Calu3 (cell line): ENCODE measurements at regions of chr12 and their contacts with region 1.

Region 1: DNA sequence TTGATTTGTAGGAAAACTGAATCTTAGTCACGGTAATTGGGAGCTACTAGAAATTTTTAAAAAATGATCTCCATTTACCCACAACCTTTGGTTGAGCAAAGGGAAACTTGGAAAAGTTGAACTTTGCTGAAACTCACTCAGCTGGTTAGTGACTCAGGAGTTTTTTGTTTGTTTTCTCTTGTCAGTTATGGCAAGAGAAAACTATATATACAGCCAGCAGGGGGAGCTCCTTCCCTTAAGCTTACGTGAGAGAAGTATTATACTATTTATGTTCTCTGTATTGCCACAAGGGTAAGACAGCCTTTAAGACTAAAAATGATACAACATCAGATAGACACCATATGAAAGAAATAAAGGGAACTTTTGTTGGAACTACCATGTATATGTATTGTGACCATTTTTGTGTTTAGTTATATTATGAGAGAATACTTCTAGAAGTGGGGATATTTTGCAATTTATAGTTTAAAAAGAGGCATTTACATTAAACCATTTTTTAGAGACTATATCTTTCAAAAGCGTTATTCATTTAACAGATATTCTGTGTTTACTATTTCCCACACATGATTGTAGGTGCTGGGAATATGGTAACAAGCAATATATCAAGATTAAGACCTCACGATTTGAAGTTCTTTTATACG is 28.1 kb upstream of the TBC1D30 start:
- DNase-seq: peak; percentile 88
- H3K4me3 Mint-ChIP-seq: no peak overlapping the region
- H3K27ac Mint-ChIP-seq: no peak overlapping the region
- H3K4me1 Mint-ChIP-seq: peaks cover 44% of the 10 kb centered on the region
- H3K27me3 Mint-ChIP-seq: no peaks in the 10 kb centered on the region
- CTCF ChIP-seq: peak; percentile 69

Region 2: DNA sequence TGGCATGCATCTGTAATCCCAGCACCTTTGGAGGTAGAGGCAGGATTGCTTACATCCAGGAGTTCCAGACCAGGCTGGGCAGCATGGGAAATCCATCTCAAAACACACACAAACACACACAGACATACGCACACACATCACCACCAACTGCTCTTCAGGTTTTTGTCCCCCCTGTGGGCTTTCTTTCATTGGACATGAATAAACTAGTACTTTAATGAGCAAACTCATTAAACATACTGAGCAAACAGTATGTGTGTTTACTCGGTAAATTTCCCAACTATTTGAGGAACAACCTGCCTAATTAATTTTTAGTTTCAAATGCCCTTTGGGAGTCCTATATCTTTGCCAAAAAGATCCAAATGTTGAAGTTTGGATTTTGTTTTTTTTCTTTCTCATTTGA is 196.1 kb before region 1 on chr12:
- CTCF ChIA-PET with region 1: no interaction called
- intact Hi-C with region 1: no loop called
- DNase-seq: no peak
- H3K4me3 Mint-ChIP-seq: no peak overlapping the region
- H3K27ac Mint-ChIP-seq: no peak overlapping the region
- H3K4me1 Mint-ChIP-seq: peaks cover 10% of the 10 kb centered on the region
- H3K27me3 Mint-ChIP-seq: no peaks in the 10 kb centered on the region
- CTCF ChIP-seq: no peak

Region 3: GRCh38 chr12:64780531-64781279 is 15.6 kb before region 1 on chr12:
- CTCF ChIA-PET with region 1: interaction called, 17 read pairs
- intact Hi-C with region 1: no loop called
- DNase-seq: peak; percentile 83
- H3K4me3 Mint-ChIP-seq: peak overlapping the region; percentile 89
- H3K27ac Mint-ChIP-seq: peak overlapping the region; percentile 76
- H3K4me1 Mint-ChIP-seq: peaks cover 25% of the 10 kb centered on the region
- H3K27me3 Mint-ChIP-seq: no peaks in the 10 kb centered on the region
- CTCF ChIP-seq: no peak

Region 4: GRCh38 chr12:64810831-64811230 is 14.5 kb after region 1 on chr12:
- CTCF ChIA-PET with region 1: interaction called, 10 read pairs
- intact Hi-C with region 1: no loop called
- DNase-seq: peak; percentile 29
- H3K4me3 Mint-ChIP-seq: no peak overlapping the region
- H3K27ac Mint-ChIP-seq: no peak overlapping the region
- H3K4me1 Mint-ChIP-seq: peaks cover 42% of the 10 kb centered on the region
- H3K27me3 Mint-ChIP-seq: no peaks in the 10 kb centered on the region
- CTCF ChIP-seq: no peak

Region 5: GRCh38 chr12:64890873-64891468 is 94.6 kb after region 1 on chr12:
- CTCF ChIA-PET with region 1: no interaction called
- intact Hi-C with region 1: loop called (anchors 2 kb)
- DNase-seq: peak; percentile 19
- H3K4me3 Mint-ChIP-seq: no peak overlapping the region
- H3K27ac Mint-ChIP-seq: no peak overlapping the region
- H3K4me1 Mint-ChIP-seq: peaks cover 16% of the 10 kb centered on the region
- H3K27me3 Mint-ChIP-seq: no peaks in the 10 kb centered on the region
- CTCF ChIP-seq: peak; percentile 64

Region 6: GRCh38 chr12:65039306-65039705 is 243.0 kb after region 1 on chr12:
- CTCF ChIA-PET with region 1: no interaction called
- intact Hi-C with region 1: no loop called
- DNase-seq: no peak
- H3K4me3 Mint-ChIP-seq: no peak overlapping the region
- H3K27ac Mint-ChIP-seq: no peak overlapping the region
- H3K4me1 Mint-ChIP-seq: no peaks in the 10 kb centered on the region
- H3K27me3 Mint-ChIP-seq: peaks cover 33% of the 10 kb centered on the region
- CTCF ChIP-seq: no peak

Region 7: DNA sequence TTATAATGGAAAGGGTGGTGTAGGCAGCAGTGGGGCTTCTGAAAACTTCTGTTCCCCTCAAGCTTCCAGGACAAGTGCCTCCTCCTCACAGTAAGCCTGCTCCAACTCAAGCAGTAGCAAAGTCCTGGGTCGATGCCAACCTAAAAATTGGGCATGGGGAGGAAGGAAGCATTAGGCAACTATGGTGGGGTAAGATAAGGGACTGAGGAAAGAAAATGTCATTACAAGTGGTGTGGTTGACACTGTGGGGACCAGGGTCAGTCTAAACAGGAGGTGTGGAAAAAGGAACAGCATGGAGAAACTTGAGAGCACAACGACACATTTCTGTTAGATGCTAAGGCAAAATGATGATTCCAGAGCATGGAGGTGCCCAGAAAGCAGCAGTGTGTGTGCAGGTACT is 289.9 kb after region 1 on chr12:
- CTCF ChIA-PET with region 1: interaction called, 10 read pairs
- intact Hi-C with region 1: no loop called
- DNase-seq: no peak
- H3K4me3 Mint-ChIP-seq: no peak overlapping the region
- H3K27ac Mint-ChIP-seq: no peak overlapping the region
- H3K4me1 Mint-ChIP-seq: no peaks in the 10 kb centered on the region
- H3K27me3 Mint-ChIP-seq: peaks cover 31% of the 10 kb centered on the region
- CTCF ChIP-seq: no peak

Region 8: DNA sequence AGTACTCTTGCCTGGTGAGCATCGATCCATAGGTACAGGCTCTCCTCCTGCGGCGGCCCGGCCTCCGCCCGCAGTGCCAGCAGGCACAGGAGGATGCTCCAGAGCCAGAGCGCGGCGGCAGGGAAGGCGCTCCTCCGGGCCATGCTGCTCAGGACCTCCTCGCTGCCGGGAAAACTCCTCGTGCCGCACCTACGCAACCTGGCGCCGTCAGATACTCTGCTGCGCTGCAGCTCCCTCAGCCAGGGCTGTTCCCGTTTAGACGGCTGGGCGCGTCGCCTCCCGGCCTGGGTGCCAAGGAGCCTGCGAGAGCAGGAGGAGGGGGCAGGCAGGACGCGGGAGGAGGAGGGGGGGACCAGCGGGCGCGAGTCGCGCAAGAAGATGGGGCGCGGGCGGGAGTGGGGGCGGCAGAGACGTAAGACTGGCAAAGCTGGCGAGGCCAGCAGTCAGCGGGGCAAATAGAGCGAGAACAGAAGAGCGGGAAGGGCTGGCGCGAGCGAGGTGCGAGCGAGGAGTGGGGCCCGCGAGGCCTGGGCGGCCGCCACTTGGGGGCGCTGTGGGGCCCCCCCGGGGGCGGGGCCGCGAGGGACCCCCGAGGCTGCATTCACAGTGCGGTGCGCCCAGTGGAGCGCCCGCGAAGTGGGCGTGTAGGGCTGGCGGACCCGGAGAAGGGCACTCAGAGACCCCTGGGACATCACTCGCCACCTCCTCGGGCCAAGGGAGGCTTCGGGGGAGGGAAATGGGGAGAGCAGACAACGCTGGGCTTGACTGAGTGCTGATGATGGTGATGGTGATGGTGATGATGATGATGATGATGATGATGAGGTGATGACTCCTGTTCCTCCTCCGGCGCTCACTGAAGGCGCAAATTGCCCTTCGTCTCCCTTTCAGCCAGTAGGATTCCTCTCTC is 325.0 kb after region 1 on chr12 and contains the start of gene WIF1:
- CTCF ChIA-PET with region 1: interaction called, 4 read pairs
- intact Hi-C with region 1: loop called (anchors 2 kb)
- DNase-seq: peak; percentile 55
- H3K4me3 Mint-ChIP-seq: peak within 1 kb of the TSS; percentile 69
- H3K27ac Mint-ChIP-seq: no peak within 1 kb of the TSS
- H3K4me1 Mint-ChIP-seq: peaks cover 8% of the 10 kb centered on the region
- H3K27me3 Mint-ChIP-seq: peaks cover 48% of the 10 kb centered on the region
- CTCF ChIP-seq: peak; percentile 82
- total RNA-seq, gene WIF1: not detected in 2 replicates